HEK293 (cell line): ENCODE measurements at regions of chr18 and their contacts with region 1.

Region 1: GRCh38 chr18:59823596-59824195 is 76.1 kb upstream of the PMAIP1 start:
- H3K4me3 ChIP-seq: no peak overlapping the region
- H3K27ac ChIP-seq: no peak overlapping the region
- H3K4me1 ChIP-seq: no peaks in the 10 kb centered on the region
- CTCF ChIP-seq: peak; percentile 71

Region 2: DNA sequence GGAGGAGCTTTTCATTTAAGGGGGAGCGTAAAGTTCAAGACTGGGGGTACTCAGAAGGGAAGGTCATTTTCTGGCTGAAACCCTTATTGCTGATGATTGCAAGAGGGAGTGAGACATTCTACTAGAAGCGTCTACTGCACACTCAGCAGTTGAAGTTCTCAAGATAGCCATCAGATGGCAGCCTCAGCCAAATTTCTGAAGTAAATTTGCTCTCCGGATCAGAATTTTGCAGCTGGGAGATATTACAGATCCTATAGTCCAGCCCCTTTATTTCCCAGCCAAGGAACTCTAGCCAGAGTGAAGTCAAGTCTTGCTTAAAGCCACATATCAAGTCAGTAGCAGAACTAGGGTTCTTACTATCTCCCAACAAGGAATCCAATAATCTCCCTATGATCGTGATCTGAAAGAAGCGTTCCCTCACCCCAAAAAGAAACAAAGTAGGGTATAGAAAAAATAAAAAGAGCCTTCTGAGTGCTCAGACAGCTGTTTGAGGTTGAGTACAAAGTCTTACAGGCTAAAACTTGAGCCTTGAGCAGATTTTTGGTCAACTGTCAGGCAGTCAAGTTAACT is 574.4 kb before region 1 on chr18:
- CTCF ChIA-PET with region 1: interaction called, 26 read pairs
- POLR2A ChIA-PET with region 1: no interaction called
- H3K4me3 ChIP-seq: no peak overlapping the region
- H3K27ac ChIP-seq: no peak overlapping the region
- H3K4me1 ChIP-seq: no peaks in the 10 kb centered on the region; the same call in 1 of the 2 replicates
- CTCF ChIP-seq: peak; percentile 48; the same call in 1 of the 2 replicates

Region 3: DNA sequence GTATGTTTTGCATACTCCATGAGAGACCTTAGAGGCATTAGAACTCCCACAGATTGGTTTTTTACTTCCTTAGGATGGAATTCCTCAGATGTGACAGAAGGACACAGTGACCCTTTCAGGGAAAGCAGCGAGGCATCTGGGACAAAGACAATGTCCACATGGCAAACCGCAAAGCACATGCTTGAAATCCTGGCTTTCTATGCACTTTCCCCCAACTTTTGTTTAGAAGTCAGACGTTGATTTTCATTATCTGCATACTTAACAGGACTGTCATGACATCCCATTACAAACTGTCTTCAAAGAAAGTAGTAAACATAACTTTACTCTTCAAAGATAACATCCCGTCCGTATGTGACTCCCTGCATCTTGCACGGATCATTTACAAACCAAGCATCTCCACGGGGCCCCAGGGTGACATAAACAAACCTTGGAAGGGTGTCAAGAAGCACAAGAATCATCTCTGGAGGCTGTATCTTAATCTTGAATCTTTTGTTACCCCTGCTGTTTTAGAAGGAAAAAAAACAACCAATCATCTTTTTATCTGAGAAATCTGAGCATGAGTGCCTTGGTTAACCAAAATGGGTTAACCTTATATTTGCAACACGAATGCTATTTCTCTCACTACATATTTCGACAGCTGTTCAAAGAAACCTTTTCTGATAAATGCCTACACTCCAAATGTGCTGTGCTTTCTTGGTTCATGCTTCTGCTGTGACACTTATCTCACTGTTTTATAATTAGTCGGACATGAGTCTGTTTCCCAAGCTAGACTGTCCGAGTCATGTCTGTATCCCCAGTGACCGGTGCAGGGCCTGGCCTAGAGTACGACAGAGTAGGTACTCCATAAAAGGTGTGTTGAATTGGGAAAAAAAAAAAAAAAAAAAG is 217.3 kb before region 1 on chr18:
- CTCF ChIA-PET with region 1: interaction called, 10 read pairs
- POLR2A ChIA-PET with region 1: no interaction called
- H3K4me3 ChIP-seq: no peak overlapping the region
- H3K27ac ChIP-seq: peak overlapping the region; percentile 73
- H3K4me1 ChIP-seq: peaks cover 22% of the 10 kb centered on the region
- CTCF ChIP-seq: no peak

Region 4: DNA sequence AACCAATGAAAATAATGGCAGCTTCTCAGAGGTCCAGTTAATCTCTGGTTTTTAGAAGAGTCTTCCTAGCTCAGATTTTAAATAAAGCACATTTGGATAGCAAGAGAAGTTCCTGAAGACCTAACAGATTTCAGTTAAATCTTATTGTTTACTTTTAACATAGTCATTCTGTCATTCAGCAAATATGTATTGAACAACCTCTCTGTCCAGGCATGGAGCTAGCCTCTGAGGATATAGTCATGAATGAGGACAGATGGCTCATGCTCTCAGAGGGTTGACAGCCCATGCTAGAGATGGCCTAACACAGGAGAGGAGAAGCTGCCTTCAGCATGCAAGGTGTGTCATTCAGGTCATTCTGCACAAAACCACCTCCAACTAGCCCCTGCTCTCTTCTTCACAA is 132.7 kb before region 1 on chr18:
- CTCF ChIA-PET with region 1: interaction called, 64 read pairs
- POLR2A ChIA-PET with region 1: no interaction called
- H3K4me3 ChIP-seq: no peak overlapping the region
- H3K27ac ChIP-seq: no peak overlapping the region
- H3K4me1 ChIP-seq: 0 out of 2 replicates have a peak, but pooled peaks cover under 1% of the 10 kb centered on the region
- CTCF ChIP-seq: no peak

Region 5: DNA sequence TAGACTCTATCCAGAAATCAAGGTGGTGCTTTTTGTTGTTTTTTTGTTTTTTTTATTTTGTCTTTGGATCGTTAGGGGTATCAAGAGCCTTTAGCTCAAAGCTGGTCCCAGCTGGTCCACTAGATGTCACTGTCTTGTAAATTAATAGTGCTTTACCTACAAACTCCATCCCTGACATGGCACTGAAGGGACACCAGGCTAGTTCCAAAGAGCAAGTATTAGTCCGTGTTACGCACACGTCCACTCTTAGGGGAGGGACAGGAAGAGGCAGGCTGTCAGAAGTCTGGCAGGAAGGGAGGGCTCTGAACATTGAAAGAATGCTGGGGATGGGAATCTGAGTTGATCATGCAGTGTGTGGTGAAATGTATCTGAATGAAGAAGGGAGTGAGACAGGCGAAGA is 40.6 kb before region 1 on chr18:
- CTCF ChIA-PET with region 1: interaction called, 66 read pairs
- POLR2A ChIA-PET with region 1: interaction called, 3 read pairs
- H3K4me3 ChIP-seq: no peak overlapping the region
- H3K27ac ChIP-seq: no peak overlapping the region
- H3K4me1 ChIP-seq: no peaks in the 10 kb centered on the region
- CTCF ChIP-seq: peak; percentile 74

Region 6: GRCh38 chr18:59899298-59900221 is 75.9 kb after region 1 on chr18 and contains the start of gene PMAIP1:
- CTCF ChIA-PET with region 1: interaction called, 3 read pairs
- POLR2A ChIA-PET with region 1: interaction called, 20 read pairs
- H3K4me3 ChIP-seq: peak within 1 kb of the TSS; percentile 61
- H3K27ac ChIP-seq: peak within 1 kb of the TSS; percentile 96
- H3K4me1 ChIP-seq: peaks cover 21% of the 10 kb centered on the region
- CTCF ChIP-seq: no peak